WTC11 (cell line): ENCODE measurements at regions of chr11 and their contacts with region 1.

Region 1: GRCh38 chr11:30914143-30914762 is 328.1 kb upstream of the MPPED2 start:
- DNase-seq: peak; percentile 83
- ATAC-seq: peak; percentile 99
- H3K4me3 Mint-ChIP-seq: no peak overlapping the region
- H3K27ac Mint-ChIP-seq: no peak overlapping the region
- H3K4me1 Mint-ChIP-seq: peaks cover 6% of the 10 kb centered on the region
- H3K27me3 Mint-ChIP-seq: no peaks in the 10 kb centered on the region
- CTCF ChIP-seq: peak; percentile 42; the same call in 1 of the 2 replicates

Region 2: GRCh38 chr11:30344085-30344484 is 570.2 kb before region 1 on chr11:
- CTCF ChIA-PET with region 1: interaction called, 20 read pairs
- POLR2A ChIA-PET with region 1: no interaction called
- DNase-seq: no peak
- ATAC-seq: no peak
- H3K4me3 Mint-ChIP-seq: no peak overlapping the region
- H3K27ac Mint-ChIP-seq: no peak overlapping the region
- H3K4me1 Mint-ChIP-seq: no peaks in the 10 kb centered on the region
- H3K27me3 Mint-ChIP-seq: no peaks in the 10 kb centered on the region
- CTCF ChIP-seq: no peak

Region 3: GRCh38 chr11:30735946-30736345 is 178.3 kb before region 1 on chr11:
- CTCF ChIA-PET with region 1: interaction called, 24 read pairs
- POLR2A ChIA-PET with region 1: no interaction called
- DNase-seq: no peak
- ATAC-seq: peak; percentile 50; the same call in 1 of the 2 replicates
- H3K4me3 Mint-ChIP-seq: no peak overlapping the region
- H3K27ac Mint-ChIP-seq: no peak overlapping the region
- H3K4me1 Mint-ChIP-seq: no peaks in the 10 kb centered on the region
- H3K27me3 Mint-ChIP-seq: no peaks in the 10 kb centered on the region
- CTCF ChIP-seq: no peak

Region 4: GRCh38 chr11:30801357-30801756 is 112.9 kb before region 1 on chr11:
- CTCF ChIA-PET with region 1: no interaction called
- POLR2A ChIA-PET with region 1: no interaction called
- DNase-seq: no peak
- ATAC-seq: no peak
- H3K4me3 Mint-ChIP-seq: no peak overlapping the region
- H3K27ac Mint-ChIP-seq: no peak overlapping the region
- H3K4me1 Mint-ChIP-seq: no peaks in the 10 kb centered on the region
- H3K27me3 Mint-ChIP-seq: no peaks in the 10 kb centered on the region
- CTCF ChIP-seq: no peak

Region 5: DNA sequence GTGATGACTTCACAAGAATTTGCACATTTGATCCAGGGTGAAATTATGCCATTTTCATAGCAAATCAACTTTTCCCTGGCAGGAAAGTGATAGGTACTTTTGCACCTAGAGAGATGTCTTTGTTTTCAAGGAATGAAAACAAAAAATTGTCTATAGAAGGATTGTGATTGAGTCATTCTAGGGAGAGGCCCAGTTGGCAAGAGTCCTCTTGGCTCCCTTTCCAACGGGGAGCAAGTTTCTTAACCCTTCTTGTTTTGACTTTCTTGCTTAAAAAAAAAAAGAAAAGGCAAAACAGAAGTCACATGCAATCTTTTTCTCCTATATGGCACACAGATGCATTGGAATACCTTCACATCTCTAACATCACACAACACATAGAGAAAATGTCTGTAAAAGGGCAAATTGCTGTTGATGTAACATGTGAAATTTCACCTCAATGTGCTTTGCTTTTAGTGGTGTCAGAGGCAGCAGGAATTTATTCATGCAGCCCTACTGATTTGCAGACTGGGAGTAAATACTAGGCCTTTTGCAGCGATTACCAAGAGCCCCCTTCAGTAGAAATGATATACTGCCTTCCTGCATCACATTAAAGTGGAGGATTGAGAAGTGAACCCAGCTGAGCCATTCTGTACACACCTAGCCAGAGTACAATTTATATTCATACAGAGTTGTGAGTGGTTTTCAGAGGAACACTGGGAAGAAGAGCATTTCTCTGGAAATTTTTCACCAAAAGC is 37.4 kb before region 1 on chr11:
- CTCF ChIA-PET with region 1: interaction called, 14 read pairs
- POLR2A ChIA-PET with region 1: no interaction called
- DNase-seq: no peak
- ATAC-seq: peak; percentile 69
- H3K4me3 Mint-ChIP-seq: no peak overlapping the region
- H3K27ac Mint-ChIP-seq: no peak overlapping the region
- H3K4me1 Mint-ChIP-seq: peaks cover 2% of the 10 kb centered on the region; the same call in 1 of the 2 replicates
- H3K27me3 Mint-ChIP-seq: no peaks in the 10 kb centered on the region
- CTCF ChIP-seq: no peak

Region 6: GRCh38 chr11:30926130-30926529 is 11.9 kb after region 1 on chr11:
- CTCF ChIA-PET with region 1: interaction called, 10 read pairs
- POLR2A ChIA-PET with region 1: no interaction called
- DNase-seq: no peak
- ATAC-seq: no peak
- H3K4me3 Mint-ChIP-seq: no peak overlapping the region
- H3K27ac Mint-ChIP-seq: no peak overlapping the region
- H3K4me1 Mint-ChIP-seq: no peaks in the 10 kb centered on the region
- H3K27me3 Mint-ChIP-seq: no peaks in the 10 kb centered on the region; the same call in 1 of the 2 replicates
- CTCF ChIP-seq: no peak

Region 7: GRCh38 chr11:30992513-30992849 is 78.2 kb after region 1 on chr11:
- CTCF ChIA-PET with region 1: no interaction called
- POLR2A ChIA-PET with region 1: no interaction called
- DNase-seq: no peak
- ATAC-seq: peak; percentile 88
- H3K4me3 Mint-ChIP-seq: no peak overlapping the region
- H3K27ac Mint-ChIP-seq: no peak overlapping the region
- H3K4me1 Mint-ChIP-seq: peaks cover 7% of the 10 kb centered on the region; the same call in 1 of the 2 replicates
- H3K27me3 Mint-ChIP-seq: no peaks in the 10 kb centered on the region
- CTCF ChIP-seq: no peak